ENCODE measurements at regions of chr17 and their contacts with region 1.

Region 1: GRCh38 chr17:8222630-8223356 is 12.4 kb upstream of the AURKB start:
- DNase-seq: peak; percentile 62
- H3K4me3 ChIP-seq: peak overlapping the region; percentile 89
- CTCF ChIP-seq: no peak

Region 2: GRCh38 chr17:8189711-8190477 is 32.9 kb before region 1 on chr17 and contains the start of gene BORCS6:
- CTCF ChIA-PET with region 1: interaction called, 8 read pairs
- POLR2A ChIA-PET with region 1: interaction called, 29 read pairs
- DNase-seq: peak; percentile 93
- H3K4me3 ChIP-seq: peak within 1 kb of the TSS; percentile 79
- CTCF ChIP-seq: no peak

Region 3: GRCh38 chr17:8248751-8249607 is 26.2 kb after region 1 on chr17 and contains the start of gene PFAS:
- CTCF ChIA-PET with region 1: interaction called, 11 read pairs
- POLR2A ChIA-PET with region 1: interaction called, 5 read pairs
- DNase-seq: peak; percentile 45
- H3K4me3 ChIP-seq: peak within 1 kb of the TSS; percentile 99
- CTCF ChIP-seq: no peak

Region 4: GRCh38 chr17:8326511-8327302 is 103.9 kb after region 1 on chr17:
- CTCF ChIA-PET with region 1: no interaction called
- POLR2A ChIA-PET with region 1: no interaction called
- DNase-seq: no peak
- H3K4me3 ChIP-seq: peak overlapping the region; percentile 55
- CTCF ChIP-seq: no peak